ENCODE measurements at regions of chr15 and their contacts with region 1.

Region 1: GRCh38 chr15:55734641-55735040 is 8.3 kb downstream of the PRTG start:
- DNase-seq: no peak
- H3K4me3 ChIP-seq: no peak overlapping the region
- CTCF ChIP-seq: no peak

Region 2: DNA sequence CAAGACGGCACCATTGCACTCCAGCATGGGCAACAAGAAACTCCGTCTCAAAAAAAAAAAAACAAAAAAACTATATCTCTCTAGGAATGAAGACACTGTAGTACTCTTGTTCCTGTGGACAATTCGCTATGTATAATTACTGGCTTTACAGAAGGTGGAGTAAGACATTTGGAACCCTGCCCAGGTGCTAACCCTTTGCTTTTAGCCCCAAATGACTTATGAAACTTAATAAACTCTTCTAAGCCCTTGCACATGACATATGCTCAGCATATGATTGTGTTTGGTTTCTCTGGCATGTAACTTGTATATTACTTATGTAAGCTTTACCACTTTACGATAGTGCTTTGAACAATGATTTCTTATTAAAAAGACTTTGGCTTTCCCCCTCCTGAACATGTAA is 35.6 kb after region 1 on chr15:
- in situ Hi-C with region 1: loop called (anchors 5 kb)
- DNase-seq: no peak
- H3K4me3 ChIP-seq: no peak overlapping the region
- CTCF ChIP-seq: no peak